ENCODE measurements at regions of chr5 and their contacts with region 1.

Region 1: GRCh38 chr5:115841382-115842088 is at the starts of genes AP3S1 and ATG12:
- DNase-seq: peak; percentile 94
- H3K4me3 ChIP-seq: peak within 1 kb of the TSS; percentile 92
- H3K27ac ChIP-seq: peak within 1 kb of the TSS; percentile 86
- H3K4me1 ChIP-seq: peaks cover 21% of the 10 kb centered on the region
- H3K27me3 ChIP-seq: no peaks in the 10 kb centered on the region
- CTCF ChIP-seq: no peak
- total RNA-seq, gene AP3S1: 56.7 to 105 TPM
- total RNA-seq, gene ATG12: 24.5 to 38.9 TPM

Region 2: DNA sequence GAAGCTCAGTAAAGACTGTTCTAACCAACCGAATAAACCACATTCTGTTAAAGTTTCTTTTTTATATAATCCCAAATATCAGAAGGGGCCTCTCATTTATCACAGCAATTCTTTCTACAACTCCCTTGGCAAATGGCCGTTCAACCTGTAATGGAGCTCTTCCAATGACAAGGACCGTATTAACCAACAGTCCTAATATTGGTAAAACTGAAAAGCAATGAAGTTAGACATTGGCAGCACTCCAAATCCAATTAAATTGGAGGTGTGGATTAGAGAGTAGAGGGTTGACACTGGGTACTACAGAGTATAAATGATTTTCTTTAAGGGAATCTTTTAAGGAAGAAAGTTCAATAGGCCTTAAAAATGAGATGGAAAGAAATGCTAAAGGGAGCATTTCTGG is 216.5 kb before region 1 on chr5:
- intact Hi-C with region 1: loop called (anchors 5 kb)
- DNase-seq: no peak
- H3K4me3 ChIP-seq: peak overlapping the region; percentile 87
- H3K27ac ChIP-seq: peak overlapping the region; percentile 91
- H3K4me1 ChIP-seq: peaks cover 12% of the 10 kb centered on the region
- H3K27me3 ChIP-seq: no peaks in the 10 kb centered on the region
- CTCF ChIP-seq: no peak

Measured in colonic mucosa (tissue), 4 donors.